ENCODE measurements at regions of chr11 and their contacts with region 1.

Region 1: DNA sequence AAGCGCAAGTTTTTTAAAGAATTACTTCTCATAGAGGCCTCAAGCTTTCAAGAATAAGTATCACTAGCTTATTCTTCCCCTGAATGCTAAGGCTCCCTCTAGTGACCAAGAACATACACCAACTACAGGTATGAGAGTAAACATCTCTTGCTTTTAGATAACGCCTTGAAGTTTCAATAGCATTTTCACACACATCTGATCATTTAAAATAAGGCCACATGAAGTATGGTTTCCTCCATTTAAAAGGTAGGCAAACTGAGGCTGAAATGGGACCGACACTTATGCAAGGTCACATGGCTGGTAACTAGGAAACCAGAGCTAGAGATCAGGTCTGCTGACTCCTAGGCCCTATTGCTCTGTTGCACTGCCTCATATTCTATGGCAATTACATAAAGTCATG is 66.5 kb downstream of the CCDC34 start:
- DNase-seq: peak; percentile 12
- H3K4me3 Mint-ChIP-seq: no peak overlapping the region
- H3K27ac Mint-ChIP-seq: no peak overlapping the region
- H3K4me1 Mint-ChIP-seq: peaks cover 17% of the 10 kb centered on the region
- H3K27me3 Mint-ChIP-seq: no peaks in the 10 kb centered on the region
- CTCF ChIP-seq: peak; percentile 29

Region 2: GRCh38 chr11:27183672-27184457 is 112.6 kb before region 1 on chr11:
- CTCF ChIA-PET with region 1: interaction called, 38 read pairs
- intact Hi-C with region 1: loop called (anchors 1 kb)
- DNase-seq: peak; percentile 57
- H3K4me3 Mint-ChIP-seq: no peak overlapping the region
- H3K27ac Mint-ChIP-seq: no peak overlapping the region
- H3K4me1 Mint-ChIP-seq: peaks cover 10% of the 10 kb centered on the region
- H3K27me3 Mint-ChIP-seq: peaks cover 14% of the 10 kb centered on the region
- CTCF ChIP-seq: peak; percentile 51

Region 3: DNA sequence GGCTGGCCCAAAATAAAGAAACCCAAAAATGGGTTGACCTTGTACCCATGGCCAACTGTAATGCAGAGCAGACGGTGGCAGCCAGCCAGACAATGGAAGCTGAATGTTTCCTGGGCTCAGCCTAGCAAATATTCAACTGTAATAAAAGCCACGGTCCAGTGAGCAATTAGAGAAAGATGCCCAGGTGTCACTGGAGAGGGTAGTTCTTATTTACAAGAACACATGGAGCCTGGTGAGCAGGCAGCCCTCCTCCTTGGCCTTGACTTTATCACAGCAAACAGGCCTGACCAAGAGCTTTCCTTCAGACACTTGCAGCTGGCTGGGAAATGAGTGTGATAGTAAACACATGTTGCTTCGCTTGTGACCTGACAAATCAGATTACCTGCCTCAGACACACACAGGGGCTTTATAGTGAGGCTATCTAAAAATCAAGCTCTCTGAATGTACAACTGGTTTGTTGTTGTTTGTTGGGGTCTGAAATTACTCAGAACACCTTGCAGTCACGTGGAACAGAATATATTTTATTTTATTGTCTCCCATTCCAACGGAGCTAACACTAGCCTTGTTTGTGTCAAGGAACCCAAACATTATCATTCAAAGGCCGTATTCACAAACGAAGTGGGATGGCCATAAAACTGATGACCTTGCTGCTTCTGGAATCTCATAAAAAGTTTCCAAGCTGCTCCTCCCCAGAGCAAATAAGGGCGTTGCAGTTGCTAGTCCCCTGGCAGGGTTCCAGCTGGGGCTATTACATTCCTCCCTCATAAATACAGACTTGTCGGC is 94.9 kb before region 1 on chr11:
- CTCF ChIA-PET with region 1: interaction called, 7 read pairs
- intact Hi-C with region 1: loop called (anchors 5 kb)
- DNase-seq: peak; percentile 88
- H3K4me3 Mint-ChIP-seq: no peak overlapping the region
- H3K27ac Mint-ChIP-seq: no peak overlapping the region
- H3K4me1 Mint-ChIP-seq: peaks cover 22% of the 10 kb centered on the region
- H3K27me3 Mint-ChIP-seq: no peaks in the 10 kb centered on the region
- CTCF ChIP-seq: no peak

Region 4: DNA sequence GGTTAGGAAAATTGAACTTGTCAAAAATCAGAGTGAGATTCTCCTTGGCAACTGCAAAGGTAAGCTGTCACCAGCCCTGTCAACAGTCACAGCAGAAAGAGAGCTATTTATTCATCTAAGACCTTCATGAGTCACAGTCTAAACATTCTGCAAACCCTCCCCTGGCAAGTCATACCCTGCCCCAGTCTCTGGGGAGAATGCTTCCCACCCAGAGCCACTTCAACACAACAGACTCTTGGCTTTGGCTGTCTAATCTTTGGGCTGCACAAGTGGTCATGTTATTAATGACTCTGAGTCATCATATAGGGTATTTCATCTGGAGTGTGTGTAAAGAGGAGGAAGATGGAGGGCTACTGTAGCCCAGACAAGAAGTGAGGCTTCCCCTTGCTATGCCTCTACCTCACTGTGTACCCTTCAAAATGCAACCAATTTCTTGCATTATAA is 86.9 kb before region 1 on chr11:
- CTCF ChIA-PET with region 1: interaction called, 12 read pairs
- intact Hi-C with region 1: loop called (anchors 5 kb)
- DNase-seq: peak; percentile 81
- H3K4me3 Mint-ChIP-seq: no peak overlapping the region
- H3K27ac Mint-ChIP-seq: peak overlapping the region; percentile 89
- H3K4me1 Mint-ChIP-seq: peaks cover 73% of the 10 kb centered on the region
- H3K27me3 Mint-ChIP-seq: no peaks in the 10 kb centered on the region
- CTCF ChIP-seq: no peak

Region 5: GRCh38 chr11:27339941-27340340 is 43.4 kb after region 1 on chr11:
- CTCF ChIA-PET with region 1: no interaction called
- intact Hi-C with region 1: no loop called
- DNase-seq: no peak
- H3K4me3 Mint-ChIP-seq: no peak overlapping the region
- H3K27ac Mint-ChIP-seq: no peak overlapping the region
- H3K4me1 Mint-ChIP-seq: no peaks in the 10 kb centered on the region
- H3K27me3 Mint-ChIP-seq: no peaks in the 10 kb centered on the region
- CTCF ChIP-seq: no peak

Measured in Calu3 (cell line).